Thyroid gland (tissue), 4 donors: ENCODE measurements at regions of chr6 and their contacts with region 1.

Region 1: GRCh38 chr6:133184798-133185372 is 56.3 kb upstream of the EYA4 start:
- DNase-seq: no peak
- H3K4me3 ChIP-seq: no peak overlapping the region
- H3K27ac ChIP-seq: no peak overlapping the region
- H3K4me1 ChIP-seq: no peaks in the 10 kb centered on the region
- H3K27me3 ChIP-seq: no peaks in the 10 kb centered on the region
- CTCF ChIP-seq: peak in 3 of 6 experiments; percentile 54 to 57 (median 57)
- POLR2A ChIP-seq: no peak

Region 2: GRCh38 chr6:133553652-133554051 is 368.8 kb after region 1 on chr6:
- intact Hi-C with region 1: loop called (anchors 10 kb)
- DNase-seq: peak; percentile 67
- H3K4me3 ChIP-seq: no peak overlapping the region
- H3K27ac ChIP-seq: no peak overlapping the region
- H3K4me1 ChIP-seq: peaks cover 16 to 28% of the 10 kb centered on the region in 2 donors
- H3K27me3 ChIP-seq: no peaks in the 10 kb centered on the region
- CTCF ChIP-seq: peak; percentile 30 to 89 (median 68)
- POLR2A ChIP-seq: no peak